ENCODE measurements at regions of chrX and their contacts with region 1.

Region 1: DNA sequence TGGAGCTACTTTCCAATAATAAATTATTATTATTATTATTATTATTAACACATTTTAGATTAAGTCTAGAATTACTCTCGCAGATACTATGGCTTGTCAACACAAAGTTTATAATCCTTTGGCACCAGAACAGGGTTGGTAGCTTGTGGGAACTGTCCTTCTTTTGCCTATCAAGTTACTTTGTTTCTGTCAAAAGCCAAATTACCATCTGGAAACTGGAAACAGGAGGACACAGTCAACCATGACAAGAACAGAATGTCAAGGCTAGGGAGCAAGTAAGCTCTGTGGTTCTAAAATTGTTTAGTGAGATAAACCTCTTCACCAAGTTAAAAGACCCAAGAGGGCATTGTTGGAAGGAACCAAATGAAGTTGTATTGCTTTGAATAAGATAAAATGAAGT is 42.5 kb downstream of the DGKK start:
- DNase-seq: no peak
- ATAC-seq: no peak
- H3K4me3 ChIP-seq: no peak overlapping the region
- H3K27ac ChIP-seq: no peak overlapping the region
- H3K4me1 ChIP-seq: no peaks in the 10 kb centered on the region
- H3K27me3 ChIP-seq: peaks cover 0 to 76% (median 0%) of the 10 kb centered on the region in 7 donors
- CTCF ChIP-seq: no peak

Region 2: DNA sequence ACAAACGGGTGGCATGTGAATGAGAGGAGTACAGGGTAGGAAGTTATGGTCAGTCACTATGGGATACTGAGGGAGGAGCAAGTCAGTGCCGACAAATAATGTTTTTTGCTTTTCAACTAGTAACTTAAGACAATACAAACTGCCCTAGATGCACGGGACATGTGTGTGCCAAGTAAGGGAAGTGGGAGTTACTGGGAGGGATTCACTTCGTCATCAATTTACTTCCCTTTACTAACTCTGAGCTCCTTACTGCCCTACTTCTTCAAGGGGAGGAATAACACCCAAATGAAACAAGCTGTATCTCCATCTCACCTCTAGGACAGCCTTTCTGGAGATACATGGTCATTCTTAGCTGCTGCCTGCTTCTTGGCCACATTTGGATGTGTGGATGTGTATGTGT is 55.2 kb before region 1 on chrX:
- intact Hi-C with region 1: loop called in 1 of 10 experiments (anchors 10 kb)
- DNase-seq: no peak
- ATAC-seq: no peak
- H3K4me3 ChIP-seq: no peak overlapping the region
- H3K27ac ChIP-seq: no peak overlapping the region
- H3K4me1 ChIP-seq: no peaks in the 10 kb centered on the region
- H3K27me3 ChIP-seq: peaks cover 0 to 22% (median 0%) of the 10 kb centered on the region in 7 donors
- CTCF ChIP-seq: no peak

Region 3: GRCh38 chrX:51035756-51036155 is 607.6 kb after region 1 on chrX:
- intact Hi-C with region 1: no loop called
- DNase-seq: no peak
- ATAC-seq: no peak
- H3K4me3 ChIP-seq: no peak overlapping the region
- H3K27ac ChIP-seq: no peak overlapping the region
- H3K4me1 ChIP-seq: no peaks in the 10 kb centered on the region
- H3K27me3 ChIP-seq: peaks cover 0 to 35% (median 0%) of the 10 kb centered on the region in 7 donors
- CTCF ChIP-seq: no peak

Measured in heart right ventricle (tissue), 16 donors.